T-cell (primary cell): ENCODE measurements at regions of chr3 and their contacts with region 1.

Region 1: GRCh38 chr3:172106989-172107388 is 67.6 kb downstream of the FNDC3B start:
- DNase-seq: peak; percentile 33 to 87 (median 61)
- ATAC-seq: peak; percentile 61 to 83 (median 78)
- H3K4me3 ChIP-seq: peak overlapping the region; percentile 29
- H3K4me3 Mint-ChIP-seq: peak overlapping the region; percentile 71 to 78 (median 72)
- H3K27ac ChIP-seq: peak overlapping the region; percentile 81
- H3K27ac Mint-ChIP-seq: peak overlapping the region; percentile 88 to 93
- H3K4me1 ChIP-seq: peaks cover 54 to 55% of the 10 kb centered on the region in 2 experiments
- H3K4me1 Mint-ChIP-seq: peaks cover 81 to 88% (median 83%) of the 10 kb centered on the region in 3 donors
- H3K27me3 ChIP-seq: no peaks in the 10 kb centered on the region
- H3K27me3 Mint-ChIP-seq: peaks cover 0 to 2% of the 10 kb centered on the region in 2 donors

Region 2: DNA sequence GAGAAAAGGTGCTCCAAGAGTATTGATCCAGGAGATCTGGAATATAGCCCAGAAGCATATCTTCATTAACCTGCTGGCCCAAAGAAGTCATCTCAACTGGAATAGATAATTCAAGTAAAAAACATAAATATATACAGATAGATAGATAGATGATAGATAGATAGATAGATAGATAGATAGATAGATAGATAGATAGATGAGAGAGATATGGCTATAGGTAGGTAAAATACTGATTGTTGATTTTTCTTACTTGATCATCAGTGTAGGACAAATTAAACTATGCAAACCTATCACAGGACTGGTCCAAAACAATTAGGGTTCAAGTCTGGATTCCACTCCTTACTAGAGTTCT is 730.4 kb before region 1 on chr3:
- CTCF ChIA-PET with region 1: no interaction called
- POLR2A ChIA-PET with region 1: interaction called in 1 of 2 experiments, 15 read pairs
- DNase-seq: no peak
- ATAC-seq: no peak
- H3K4me3 ChIP-seq: no peak overlapping the region
- H3K4me3 Mint-ChIP-seq: no peak overlapping the region
- H3K27ac ChIP-seq: no peak overlapping the region
- H3K27ac Mint-ChIP-seq: no peak overlapping the region
- H3K4me1 ChIP-seq: peaks cover 12 to 18% of the 10 kb centered on the region in 2 experiments
- H3K4me1 Mint-ChIP-seq: peaks cover 23 to 44% (median 26%) of the 10 kb centered on the region in 3 donors
- H3K27me3 ChIP-seq: no peaks in the 10 kb centered on the region
- H3K27me3 Mint-ChIP-seq: no peaks in the 10 kb centered on the region

Region 3: GRCh38 chr3:172039436-172040077 is 67.4 kb before region 1 on chr3 and contains the start of gene FNDC3B:
- CTCF ChIA-PET with region 1: interaction called, 10 to 12 read pairs
- POLR2A ChIA-PET with region 1: interaction called in 1 of 2 experiments, 5 read pairs
- DNase-seq: peak; percentile 80 to 96 (median 90)
- ATAC-seq: peak; percentile 94 to 95 (median 94)
- H3K4me3 ChIP-seq: peak within 1 kb of the TSS; percentile 81 to 91
- H3K4me3 Mint-ChIP-seq: peak within 1 kb of the TSS; percentile 95 to 99 (median 98)
- H3K27ac ChIP-seq: peak within 1 kb of the TSS; percentile 76
- H3K27ac Mint-ChIP-seq: peak within 1 kb of the TSS; percentile 90 to 94
- H3K4me1 ChIP-seq: peaks cover 2 to 27% of the 10 kb centered on the region in 2 experiments
- H3K4me1 Mint-ChIP-seq: peaks cover 47 to 64% (median 51%) of the 10 kb centered on the region in 3 donors
- H3K27me3 ChIP-seq: no peaks in the 10 kb centered on the region
- H3K27me3 Mint-ChIP-seq: no peaks in the 10 kb centered on the region
- total RNA-seq, gene FNDC3B: 18.1 to 46.5 (median 23.5) TPM

Region 4: GRCh38 chr3:172094621-172095557 is 12.1 kb before region 1 on chr3:
- CTCF ChIA-PET with region 1: interaction called in 1 of 2 experiments, 10 read pairs
- POLR2A ChIA-PET with region 1: interaction called in 1 of 2 experiments, 7 read pairs
- DNase-seq: peak in 5 of 35 experiments; percentile 9 to 25 (median 16)
- ATAC-seq: no peak
- H3K4me3 ChIP-seq: no peak overlapping the region
- H3K4me3 Mint-ChIP-seq: no peak overlapping the region
- H3K27ac ChIP-seq: no peak overlapping the region
- H3K27ac Mint-ChIP-seq: peak overlapping the region in 1 of 2 donors; percentile 12
- H3K4me1 ChIP-seq: peaks cover 2 to 7% of the 10 kb centered on the region in 2 experiments
- H3K4me1 Mint-ChIP-seq: peaks cover 44 to 57% (median 51%) of the 10 kb centered on the region in 3 donors
- H3K27me3 ChIP-seq: no peaks in the 10 kb centered on the region
- H3K27me3 Mint-ChIP-seq: no peaks in the 10 kb centered on the region